ENCODE measurements at regions of chr5 and their contacts with region 1.

Region 1: DNA sequence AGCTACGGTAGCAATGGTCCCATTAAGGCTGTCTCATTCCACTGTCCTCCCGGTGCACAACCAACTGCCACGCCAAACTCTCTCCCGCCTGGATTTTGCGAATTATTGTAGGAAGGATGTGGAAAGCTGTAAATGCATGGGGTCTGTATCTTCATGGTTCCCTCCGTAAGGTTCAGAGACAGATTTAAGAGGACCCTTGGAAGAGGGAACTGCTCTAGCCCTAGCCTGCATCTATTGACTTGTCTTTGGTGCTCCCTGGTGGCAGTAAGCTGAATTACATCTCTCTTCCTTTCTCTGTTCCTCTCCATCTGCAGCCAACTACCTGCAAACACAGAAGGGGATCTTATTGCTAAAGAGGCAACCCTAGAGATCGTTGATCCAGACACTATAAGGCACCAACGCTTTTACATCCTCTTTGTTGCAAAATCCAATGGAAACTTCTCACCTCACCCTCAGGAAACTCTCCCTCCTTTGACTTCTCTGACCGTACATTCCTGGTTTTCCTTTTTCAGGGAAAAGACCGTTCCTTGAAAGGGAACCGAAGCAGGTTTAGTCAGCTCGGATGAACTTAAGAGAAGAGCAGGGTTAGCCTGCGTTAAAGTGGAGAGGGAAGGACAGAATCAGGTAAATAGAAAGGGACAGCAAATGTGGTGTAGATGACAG is 11.9 kb downstream of the CAPSL start:
- DNase-seq: no peak
- ATAC-seq: peak; percentile 78

Region 2: GRCh38 chr5:35617435-35618303 is 308.9 kb before region 1 on chr5 and contains the start of gene SPEF2:
- intact Hi-C with region 1: loop called (anchors 5 kb)
- DNase-seq: peak; percentile 88
- ATAC-seq: peak; percentile 100
- total RNA-seq, gene SPEF2: 1.1 TPM

Region 3: GRCh38 chr5:35777358-35778087 is 149.0 kb before region 1 on chr5:
- intact Hi-C with region 1: loop called (anchors 5 kb)
- DNase-seq: peak; percentile 44
- ATAC-seq: no peak